ENCODE measurements at regions of chr3 and their contacts with region 1.

Region 1: GRCh38 chr3:139718415-139718814 is 40.6 kb upstream of the NMNAT3 start:
- DNase-seq: peak; percentile 60
- ATAC-seq: peak; percentile 85
- H3K4me3 Mint-ChIP-seq: no peak overlapping the region
- H3K27ac Mint-ChIP-seq: no peak overlapping the region
- H3K4me1 Mint-ChIP-seq: peaks cover 31% of the 10 kb centered on the region
- H3K27me3 Mint-ChIP-seq: no peaks in the 10 kb centered on the region; the same call in 1 of the 2 replicates
- CTCF ChIP-seq: peak; percentile 29; the same call in 1 of the 2 replicates

Region 2: GRCh38 chr3:139642996-139643395 is 75.4 kb before region 1 on chr3:
- CTCF ChIA-PET with region 1: no interaction called
- POLR2A ChIA-PET with region 1: no interaction called
- DNase-seq: no peak
- ATAC-seq: no peak
- H3K4me3 Mint-ChIP-seq: no peak overlapping the region
- H3K27ac Mint-ChIP-seq: no peak overlapping the region
- H3K4me1 Mint-ChIP-seq: no peaks in the 10 kb centered on the region
- H3K27me3 Mint-ChIP-seq: no peaks in the 10 kb centered on the region
- CTCF ChIP-seq: no peak

Region 3: GRCh38 chr3:139671863-139672646 is 46.4 kb before region 1 on chr3:
- CTCF ChIA-PET with region 1: no interaction called
- POLR2A ChIA-PET with region 1: no interaction called
- DNase-seq: no peak
- ATAC-seq: no peak
- H3K4me3 Mint-ChIP-seq: no peak overlapping the region
- H3K27ac Mint-ChIP-seq: no peak overlapping the region
- H3K4me1 Mint-ChIP-seq: peaks cover 65% of the 10 kb centered on the region
- H3K27me3 Mint-ChIP-seq: peaks cover 28% of the 10 kb centered on the region
- CTCF ChIP-seq: no peak

Region 4: GRCh38 chr3:139735191-139735590 is 16.8 kb after region 1 on chr3:
- CTCF ChIA-PET with region 1: no interaction called
- POLR2A ChIA-PET with region 1: no interaction called
- DNase-seq: no peak
- ATAC-seq: no peak
- H3K4me3 Mint-ChIP-seq: no peak overlapping the region
- H3K27ac Mint-ChIP-seq: no peak overlapping the region
- H3K4me1 Mint-ChIP-seq: no peaks in the 10 kb centered on the region
- H3K27me3 Mint-ChIP-seq: no peaks in the 10 kb centered on the region; the same call in none of the 2 replicates
- CTCF ChIP-seq: no peak

Region 5: DNA sequence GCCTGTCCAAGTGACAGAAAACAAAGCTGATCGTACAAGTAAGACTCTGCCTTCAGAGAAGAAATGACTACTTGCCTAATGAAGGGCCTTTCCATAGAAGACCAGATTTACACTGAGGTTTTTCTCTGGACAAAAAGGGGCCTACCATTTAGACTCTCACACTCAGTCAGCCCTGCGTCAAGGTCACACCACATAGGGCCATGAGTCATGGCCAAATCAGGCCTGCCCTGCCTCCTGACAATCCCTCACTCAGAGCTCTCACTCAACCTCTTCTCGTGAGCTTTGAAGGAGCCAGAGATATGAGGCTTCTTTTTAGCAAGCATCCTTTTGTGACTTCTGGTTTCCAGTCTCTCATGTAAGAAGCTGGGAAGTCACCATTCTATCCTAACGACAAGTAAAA is 27.4 kb after region 1 on chr3:
- CTCF ChIA-PET with region 1: interaction called, 10 read pairs
- POLR2A ChIA-PET with region 1: no interaction called
- DNase-seq: no peak
- ATAC-seq: peak; percentile 69
- H3K4me3 Mint-ChIP-seq: no peak overlapping the region
- H3K27ac Mint-ChIP-seq: no peak overlapping the region
- H3K4me1 Mint-ChIP-seq: peaks cover 19% of the 10 kb centered on the region
- H3K27me3 Mint-ChIP-seq: peaks cover 5% of the 10 kb centered on the region; the same call in 1 of the 2 replicates
- CTCF ChIP-seq: no peak

Measured in WTC11 (cell line).